Right ventricle myocardium superior (tissue), 1 donor: ENCODE measurements at regions of chr4 and their contacts with region 1.

Region 1: DNA sequence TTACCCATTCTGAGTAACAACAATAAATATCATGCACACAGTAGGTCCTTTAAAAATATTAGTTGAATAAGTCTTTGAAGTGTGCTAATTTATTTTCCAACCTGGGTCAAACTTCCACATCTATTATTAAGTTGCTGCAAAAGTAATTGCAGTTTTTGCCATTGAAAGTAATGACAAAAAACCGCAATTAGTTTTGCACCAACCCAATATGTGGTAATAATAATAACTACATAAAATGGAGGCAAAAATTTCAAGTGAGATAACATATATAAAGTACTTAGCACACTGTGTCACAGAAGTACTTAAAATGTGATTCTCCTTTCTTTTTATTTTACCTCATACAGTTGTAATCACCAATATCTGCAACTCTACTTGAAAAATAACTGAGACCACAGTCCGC is 45.8 kb downstream of the BMP3 start:
- DNase-seq: no peak
- ATAC-seq: no peak

Region 2: GRCh38 chr4:80454040-80454439 is 622.3 kb before region 1 on chr4:
- intact Hi-C with region 1: no loop called
- DNase-seq: no peak
- ATAC-seq: no peak

Region 3: DNA sequence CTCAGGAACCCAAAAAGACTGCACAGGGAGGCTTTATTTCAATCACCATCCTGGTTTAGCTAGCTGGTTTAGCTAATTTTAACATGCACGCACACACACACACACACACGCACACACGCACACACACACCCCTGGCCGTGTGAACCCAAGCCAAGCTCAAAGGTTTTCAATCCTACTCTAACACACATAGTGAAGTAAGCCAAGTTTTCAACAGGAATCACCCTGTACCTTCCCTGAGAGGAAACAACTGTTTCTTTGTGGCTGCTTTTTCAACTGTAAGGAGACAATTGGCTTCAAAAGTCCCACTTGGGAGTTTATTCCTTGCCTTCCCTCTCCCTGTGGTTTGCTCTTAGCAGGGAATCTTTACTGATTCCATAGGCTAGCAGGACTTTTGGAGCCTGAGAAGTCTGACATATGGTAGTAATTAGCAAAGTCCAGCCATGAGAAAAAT is 144.7 kb before region 1 on chr4:
- intact Hi-C with region 1: no loop called
- DNase-seq: no peak
- ATAC-seq: no peak

Region 4: GRCh38 chr4:81346719-81347118 is 270.4 kb after region 1 on chr4:
- intact Hi-C with region 1: loop called (anchors 5 kb)
- DNase-seq: no peak
- ATAC-seq: no peak